ENCODE measurements at regions of chr17 and their contacts with region 1.

Region 1: GRCh38 chr17:43928609-43929008 is 13.7 kb downstream of the PPY start:
- DNase-seq: no peak

Region 2: DNA sequence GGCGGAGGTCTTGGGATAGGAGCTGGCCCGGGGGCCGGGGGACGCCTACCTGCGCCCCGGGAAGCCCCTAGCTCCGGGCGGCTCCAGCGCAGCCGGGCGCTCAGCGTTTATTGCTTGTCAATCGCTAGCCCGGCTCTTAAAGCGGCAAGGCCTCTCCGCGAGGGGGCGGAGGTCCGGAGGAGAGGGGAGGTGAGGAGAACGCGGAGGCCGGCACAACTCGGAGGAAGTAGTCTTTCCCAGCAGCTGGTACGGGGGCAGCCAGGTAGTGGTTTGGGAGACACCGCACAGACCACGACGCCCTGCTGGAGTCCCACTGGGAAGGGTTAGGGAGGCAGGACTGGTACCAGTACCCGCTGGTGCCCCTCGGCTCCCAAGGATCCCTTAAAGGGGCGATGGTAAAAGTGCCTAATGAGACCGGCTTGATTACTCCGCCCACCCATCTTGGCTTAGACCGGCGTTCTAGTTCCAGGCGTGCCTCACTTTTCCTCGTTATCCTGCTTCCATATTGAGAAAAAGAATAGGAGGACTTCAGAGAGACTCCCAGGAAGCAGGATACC is 21.1 kb before region 1 on chr17 and contains the start of gene MPP2:
- CTCF ChIA-PET with region 1: interaction called, 10 read pairs
- POLR2A ChIA-PET with region 1: interaction called, 3 read pairs
- DNase-seq: peak; percentile 83

Measured in HEK293T (cell line).